CD8-positive, alpha-beta memory T cell (primary cell): ENCODE measurements at regions of chr14 and their contacts with region 1.

Region 1: DNA sequence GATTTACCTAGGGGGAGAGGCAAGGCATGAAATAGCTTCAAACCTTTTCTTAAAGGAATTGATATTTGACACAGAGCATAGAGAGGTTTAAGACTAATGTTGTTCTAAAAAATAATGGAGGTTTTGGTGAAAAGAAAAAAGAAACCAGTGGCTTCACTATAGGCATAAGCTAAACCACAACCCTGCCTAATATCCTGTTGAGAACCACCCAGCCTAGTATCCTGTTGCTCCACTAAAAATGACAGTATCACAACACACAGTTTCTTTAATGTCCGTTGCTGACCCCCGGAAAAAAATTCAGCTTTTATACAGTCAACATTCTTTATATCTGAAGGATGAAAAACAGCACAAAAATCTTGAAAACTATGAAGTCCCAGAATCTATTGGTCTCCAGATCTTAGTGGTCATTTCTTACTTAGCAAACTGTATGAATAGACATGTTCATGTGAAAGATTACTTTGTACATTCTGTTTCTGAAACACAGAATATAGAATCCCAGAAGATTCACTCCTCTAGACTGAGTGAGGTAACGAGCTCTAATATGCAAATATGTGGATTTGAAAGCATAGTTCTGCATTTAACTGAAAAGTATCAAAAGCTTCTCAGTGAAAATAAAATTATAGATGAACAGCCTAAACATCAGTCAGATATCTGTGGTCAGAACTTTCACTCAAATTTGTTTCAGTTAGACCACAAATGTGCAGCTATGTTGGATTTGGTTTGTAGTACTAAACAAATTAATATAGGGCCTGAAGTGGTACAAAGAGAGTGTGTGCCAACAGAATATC is 40.5 kb downstream of the GALC start:
- DNase-seq: peak in 1 of 5 donors; percentile 41
- H3K4me3 ChIP-seq: peak overlapping the region; percentile 18
- H3K4me3 Mint-ChIP-seq: peak overlapping the region; percentile 21 to 85 (median 78)
- H3K27ac ChIP-seq: peak overlapping the region; percentile 25
- H3K27ac Mint-ChIP-seq: peak overlapping the region; percentile 67 to 99 (median 96)
- H3K4me1 ChIP-seq: peaks cover 27% of the 10 kb centered on the region
- H3K4me1 Mint-ChIP-seq: peaks cover 66 to 83% (median 69%) of the 10 kb centered on the region in 3 donors
- H3K27me3 ChIP-seq: no peaks in the 10 kb centered on the region
- H3K27me3 Mint-ChIP-seq: no peaks in the 10 kb centered on the region

Region 2: DNA sequence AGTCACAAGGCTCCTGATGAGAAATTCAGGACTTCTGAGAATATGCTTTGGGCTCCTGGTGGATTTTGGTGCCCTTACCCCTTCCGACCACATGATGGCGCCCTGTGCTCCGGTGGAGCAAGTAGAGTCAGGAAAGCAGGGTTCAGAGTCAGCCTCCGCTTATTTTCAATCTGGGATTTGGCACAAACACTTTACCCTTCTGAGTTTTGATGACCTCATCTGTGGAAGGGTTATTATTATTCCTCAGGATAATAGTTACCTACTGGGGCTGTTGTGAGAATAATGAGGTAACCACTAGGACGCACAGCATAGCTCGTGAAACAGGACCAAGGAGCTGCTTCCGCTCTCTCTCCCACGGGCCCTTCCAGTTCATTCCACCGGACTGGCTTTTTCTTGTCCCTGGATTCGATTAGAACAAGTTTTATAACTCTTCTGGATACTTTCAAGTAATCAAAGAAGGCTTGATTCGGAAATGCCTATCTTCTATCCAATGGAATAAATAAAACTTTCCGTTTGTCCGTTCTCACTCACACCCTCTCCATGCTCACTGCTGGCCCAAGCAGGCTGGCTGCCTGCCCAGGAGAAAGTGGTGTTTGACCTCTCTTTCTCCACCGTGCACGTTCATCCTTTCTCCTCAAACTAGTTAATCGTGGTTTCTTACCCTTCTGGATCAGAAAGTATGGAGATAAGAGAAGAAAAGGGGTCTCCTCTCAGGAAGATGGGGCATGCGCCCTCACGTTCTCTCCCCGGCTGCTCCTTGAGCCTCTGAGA is 64.1 kb before region 1 on chr14:
- CTCF ChIA-PET with region 1: no interaction called
- POLR2A ChIA-PET with region 1: no interaction called
- DNase-seq: no peak
- H3K4me3 ChIP-seq: no peak overlapping the region
- H3K4me3 Mint-ChIP-seq: no peak overlapping the region
- H3K27ac ChIP-seq: no peak overlapping the region
- H3K27ac Mint-ChIP-seq: no peak overlapping the region
- H3K4me1 ChIP-seq: no peaks in the 10 kb centered on the region
- H3K4me1 Mint-ChIP-seq: no peaks in the 10 kb centered on the region
- H3K27me3 ChIP-seq: no peaks in the 10 kb centered on the region
- H3K27me3 Mint-ChIP-seq: peaks cover 9 to 13% of the 10 kb centered on the region in 2 donors

Region 3: DNA sequence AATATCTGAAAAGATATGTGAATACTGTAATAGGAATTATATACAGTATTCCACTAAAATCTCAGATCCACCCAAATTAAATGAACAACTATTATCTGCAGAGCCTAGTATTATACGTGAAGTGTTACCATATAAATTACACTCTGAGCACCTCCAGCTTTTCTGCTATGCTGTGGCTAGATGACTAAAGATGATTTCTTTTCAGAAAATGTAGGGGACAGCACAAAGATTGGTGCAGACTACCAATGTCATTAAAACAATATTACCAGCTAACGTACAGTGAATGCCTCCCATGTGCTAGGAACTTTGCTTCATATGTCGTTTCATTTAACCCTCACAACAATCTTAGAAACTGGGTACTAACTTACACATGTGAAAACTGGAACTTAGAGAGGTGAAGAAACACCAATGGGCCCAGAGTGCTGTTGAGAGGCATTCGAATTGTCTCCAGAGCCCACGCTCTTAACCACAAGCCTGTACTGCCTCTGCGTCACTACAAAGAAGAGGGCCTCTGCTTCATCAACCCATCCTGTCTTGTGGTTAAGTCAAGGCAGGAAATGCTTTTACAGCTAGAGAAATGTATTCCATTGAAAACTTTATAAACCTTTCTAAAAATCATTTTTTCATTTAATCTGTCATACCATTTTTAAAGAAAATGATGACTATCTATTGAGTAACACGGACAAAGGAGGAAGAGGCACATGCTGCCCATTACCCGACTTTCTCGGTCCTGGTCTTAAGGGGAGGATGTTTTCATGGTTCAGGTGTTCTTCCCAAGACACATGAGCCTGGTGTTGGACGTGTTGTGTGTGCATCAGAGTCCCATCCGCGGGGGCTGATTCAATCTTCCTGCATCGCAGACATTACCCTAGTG is 53.7 kb after region 1 on chr14:
- CTCF ChIA-PET with region 1: interaction called, 8 read pairs
- POLR2A ChIA-PET with region 1: interaction called, 12 read pairs
- DNase-seq: peak; percentile 36 to 86 (median 84)
- H3K4me3 ChIP-seq: peak overlapping the region; percentile 58
- H3K4me3 Mint-ChIP-seq: peak overlapping the region; percentile 77 to 95 (median 88)
- H3K27ac ChIP-seq: peak overlapping the region; percentile 76
- H3K27ac Mint-ChIP-seq: peak overlapping the region; percentile 94 to 99 (median 98)
- H3K4me1 ChIP-seq: peaks cover 60% of the 10 kb centered on the region
- H3K4me1 Mint-ChIP-seq: peaks cover 62 to 86% (median 85%) of the 10 kb centered on the region in 3 donors
- H3K27me3 ChIP-seq: no peaks in the 10 kb centered on the region
- H3K27me3 Mint-ChIP-seq: peaks cover 0 to 1% of the 10 kb centered on the region in 2 donors

Region 4: GRCh38 chr14:88017535-88017934 is 65.0 kb after region 1 on chr14:
- CTCF ChIA-PET with region 1: no interaction called
- POLR2A ChIA-PET with region 1: no interaction called
- DNase-seq: no peak
- H3K4me3 ChIP-seq: no peak overlapping the region
- H3K4me3 Mint-ChIP-seq: peak overlapping the region in 1 of 7 donors; percentile 55
- H3K27ac ChIP-seq: no peak overlapping the region
- H3K27ac Mint-ChIP-seq: peak overlapping the region in 7 of 8 donors; percentile 19 to 97 (median 88)
- H3K4me1 ChIP-seq: peaks cover 16% of the 10 kb centered on the region
- H3K4me1 Mint-ChIP-seq: peaks cover 76 to 90% (median 87%) of the 10 kb centered on the region in 3 donors
- H3K27me3 ChIP-seq: no peaks in the 10 kb centered on the region
- H3K27me3 Mint-ChIP-seq: no peaks in the 10 kb centered on the region